Caco-2 (cell line): ENCODE measurements at regions of chr14 and their contacts with region 1.

Region 1: DNA sequence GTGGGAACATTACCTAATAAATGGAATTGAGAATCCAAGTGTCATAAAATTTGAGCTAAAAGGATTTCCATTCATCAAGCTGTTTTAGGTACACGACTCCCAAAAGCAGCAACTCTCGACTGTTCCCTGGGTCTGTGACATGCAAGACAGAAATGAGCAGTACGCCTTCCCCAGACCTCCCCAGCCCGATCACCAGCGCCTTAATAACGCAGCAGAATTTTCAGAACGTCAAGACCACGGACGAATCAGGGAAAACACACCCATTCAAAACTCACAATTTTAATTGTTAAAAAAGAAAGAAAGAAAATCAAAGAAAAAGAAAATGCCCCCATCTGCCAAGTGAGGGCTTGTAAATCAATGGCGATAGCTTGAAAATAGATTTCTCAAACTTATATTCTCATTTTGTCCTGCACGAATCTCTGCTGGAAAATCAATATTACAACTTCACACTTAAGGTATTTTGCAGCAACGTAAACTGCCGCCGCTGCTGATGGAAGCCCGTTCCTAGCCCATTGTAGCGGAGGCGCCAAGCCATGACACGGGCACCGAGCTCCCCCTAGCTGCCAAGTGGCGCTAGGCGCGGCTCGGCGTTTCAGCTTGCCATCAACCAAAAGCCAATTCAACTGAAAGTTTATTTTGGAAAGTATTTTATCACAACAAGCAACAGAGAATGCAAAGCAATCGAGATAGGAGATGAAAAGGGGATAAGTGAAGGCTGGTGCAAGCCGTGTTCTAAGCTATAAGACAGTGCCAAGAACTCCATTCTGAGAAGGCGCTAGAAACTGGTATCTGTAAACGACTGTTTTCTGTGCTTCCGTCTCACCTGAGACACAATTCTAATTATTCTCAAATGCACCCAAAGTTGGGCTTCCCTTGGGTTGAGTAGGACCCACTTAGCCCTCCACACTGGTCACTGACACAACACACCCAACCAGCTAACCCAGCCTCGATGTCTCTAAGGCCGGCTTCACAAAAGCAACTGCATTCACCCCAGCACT is 5.5 kb downstream of the BCL11B start:
- DNase-seq: peak; percentile 56 to 79
- H3K4me3 ChIP-seq: no peak overlapping the region
- H3K4me3 Mint-ChIP-seq: no peak overlapping the region
- H3K27ac Mint-ChIP-seq: no peak overlapping the region
- H3K4me1 ChIP-seq: no peaks in the 10 kb centered on the region
- H3K4me1 Mint-ChIP-seq: peaks cover 11% of the 10 kb centered on the region
- H3K27me3 ChIP-seq: peaks cover 5% of the 10 kb centered on the region
- H3K27me3 Mint-ChIP-seq: peaks cover 40% of the 10 kb centered on the region
- CTCF ChIP-seq: peak; percentile 86 to 98

Region 2: DNA sequence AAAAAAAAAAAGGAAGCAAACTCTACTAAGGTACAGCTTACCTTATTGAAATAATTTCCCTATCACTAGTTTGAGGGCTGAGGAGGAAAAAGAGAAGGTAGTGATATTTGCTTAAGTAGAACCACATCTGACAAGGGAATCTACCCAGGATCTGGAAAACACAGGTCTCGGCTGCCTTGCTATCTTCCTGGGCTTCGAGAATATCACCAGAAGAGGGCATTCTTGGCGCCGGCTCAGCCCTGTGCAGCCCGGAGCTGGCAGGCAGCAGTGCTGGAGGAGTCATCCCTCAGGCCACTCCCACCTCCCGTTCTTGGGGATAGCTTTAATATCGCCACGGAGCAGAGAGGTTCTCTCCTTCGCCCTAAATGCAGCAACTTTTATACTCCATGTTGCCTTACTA is 1288.1 kb before region 1 on chr14:
- CTCF ChIA-PET with region 1: interaction called, 8 read pairs
- POLR2A ChIA-PET with region 1: no interaction called
- intact Hi-C with region 1: loop called (anchors 1 kb)
- DNase-seq: peak; percentile 53 to 55
- H3K4me3 ChIP-seq: no peak overlapping the region
- H3K4me3 Mint-ChIP-seq: peak overlapping the region; percentile 29
- H3K27ac Mint-ChIP-seq: no peak overlapping the region
- H3K4me1 ChIP-seq: no peaks in the 10 kb centered on the region
- H3K4me1 Mint-ChIP-seq: no peaks in the 10 kb centered on the region
- H3K27me3 ChIP-seq: no peaks in the 10 kb centered on the region
- H3K27me3 Mint-ChIP-seq: no peaks in the 10 kb centered on the region
- CTCF ChIP-seq: peak in 1 of 2 experiments; percentile 29

Region 3: GRCh38 chr14:98957211-98958047 is 309.1 kb before region 1 on chr14:
- CTCF ChIA-PET with region 1: no interaction called
- POLR2A ChIA-PET with region 1: no interaction called
- intact Hi-C with region 1: no loop called
- DNase-seq: no peak
- H3K4me3 ChIP-seq: no peak overlapping the region
- H3K4me3 Mint-ChIP-seq: no peak overlapping the region
- H3K27ac Mint-ChIP-seq: no peak overlapping the region
- H3K4me1 ChIP-seq: no peaks in the 10 kb centered on the region
- H3K4me1 Mint-ChIP-seq: no peaks in the 10 kb centered on the region
- H3K27me3 ChIP-seq: no peaks in the 10 kb centered on the region
- H3K27me3 Mint-ChIP-seq: peaks cover 6% of the 10 kb centered on the region
- CTCF ChIP-seq: no peak

Region 4: DNA sequence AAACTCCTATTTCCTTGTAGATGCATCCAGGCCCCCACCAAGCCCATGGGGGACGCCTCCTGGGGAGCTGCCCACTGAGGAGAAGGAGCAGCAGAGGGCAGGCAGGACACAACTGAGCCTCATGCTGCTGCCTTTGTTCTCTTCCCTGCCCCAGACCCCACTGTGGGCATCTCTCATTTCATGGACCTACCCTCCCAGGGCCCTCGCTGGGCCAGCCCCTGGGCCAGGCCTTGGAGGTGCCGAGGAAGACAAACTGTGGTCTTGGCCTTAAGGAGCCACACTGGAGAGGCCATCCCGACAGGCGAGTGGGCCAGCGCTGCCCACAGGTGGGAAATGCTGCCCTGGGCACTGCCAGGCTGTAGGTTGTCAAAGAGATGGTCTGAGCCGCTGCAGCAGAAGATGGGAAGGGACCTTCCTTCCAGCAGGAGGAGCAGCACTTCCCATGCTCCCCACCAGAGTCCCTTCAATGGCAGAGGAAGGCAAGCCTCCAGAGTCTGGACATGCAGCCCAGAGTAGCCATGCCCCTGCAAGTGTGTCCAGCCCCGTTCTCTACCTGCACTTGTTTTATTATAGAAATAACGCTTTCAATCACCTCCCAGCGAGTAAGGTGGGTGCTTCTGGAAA is 141.9 kb before region 1 on chr14:
- CTCF ChIA-PET with region 1: interaction called, 5 read pairs
- POLR2A ChIA-PET with region 1: no interaction called
- intact Hi-C with region 1: loop called (anchors 1 kb)
- DNase-seq: no peak
- H3K4me3 ChIP-seq: no peak overlapping the region
- H3K4me3 Mint-ChIP-seq: no peak overlapping the region
- H3K27ac Mint-ChIP-seq: no peak overlapping the region
- H3K4me1 ChIP-seq: no peaks in the 10 kb centered on the region
- H3K4me1 Mint-ChIP-seq: no peaks in the 10 kb centered on the region
- H3K27me3 ChIP-seq: no peaks in the 10 kb centered on the region; the same call in 1 of the 2 replicates
- H3K27me3 Mint-ChIP-seq: peaks cover 8% of the 10 kb centered on the region
- CTCF ChIP-seq: no peak

Region 5: DNA sequence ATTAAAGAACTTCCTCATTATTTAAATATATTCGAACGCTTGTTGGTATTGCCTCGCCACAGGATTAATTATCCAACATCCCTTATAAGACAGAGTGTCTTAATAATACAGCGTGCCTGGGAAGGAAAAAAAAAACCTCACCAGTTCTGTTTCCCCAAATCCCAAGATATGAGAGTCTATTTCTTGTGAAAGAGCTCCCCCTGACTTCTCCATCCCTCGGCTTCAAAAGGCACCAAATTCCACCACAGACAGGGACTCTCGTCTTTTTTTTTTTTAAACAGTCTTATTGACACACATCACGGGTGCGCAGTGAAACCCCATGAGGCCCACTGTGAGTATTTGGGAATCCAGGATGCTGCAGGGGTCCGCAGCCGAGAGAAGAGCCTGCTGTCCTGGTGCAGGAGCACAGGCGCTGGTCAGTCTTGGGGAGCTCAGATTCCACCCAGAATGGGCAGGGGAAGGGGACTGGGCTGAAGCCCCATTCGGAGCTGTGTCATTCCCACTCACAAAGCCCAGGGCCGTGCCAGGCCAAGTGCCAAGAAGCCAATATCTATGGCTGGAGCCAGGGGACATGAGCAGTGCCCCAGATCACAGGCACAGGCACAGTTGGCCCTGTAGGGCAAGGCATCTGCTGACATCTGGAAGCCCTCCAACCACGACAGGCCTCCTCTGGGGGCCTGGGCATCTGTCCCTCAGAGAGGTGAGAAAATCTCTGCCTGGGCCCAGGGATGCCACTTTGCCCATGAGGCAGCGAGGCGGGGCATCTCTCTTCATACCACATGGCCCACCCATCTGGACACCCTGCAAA is 66.4 kb before region 1 on chr14:
- CTCF ChIA-PET with region 1: no interaction called
- POLR2A ChIA-PET with region 1: no interaction called
- intact Hi-C with region 1: loop called (anchors 5 kb)
- DNase-seq: no peak
- H3K4me3 ChIP-seq: no peak overlapping the region
- H3K4me3 Mint-ChIP-seq: no peak overlapping the region
- H3K27ac Mint-ChIP-seq: no peak overlapping the region
- H3K4me1 ChIP-seq: no peaks in the 10 kb centered on the region
- H3K4me1 Mint-ChIP-seq: no peaks in the 10 kb centered on the region
- H3K27me3 ChIP-seq: no peaks in the 10 kb centered on the region
- H3K27me3 Mint-ChIP-seq: peaks cover 5% of the 10 kb centered on the region
- CTCF ChIP-seq: peak in 1 of 2 experiments; percentile 5

Region 6: DNA sequence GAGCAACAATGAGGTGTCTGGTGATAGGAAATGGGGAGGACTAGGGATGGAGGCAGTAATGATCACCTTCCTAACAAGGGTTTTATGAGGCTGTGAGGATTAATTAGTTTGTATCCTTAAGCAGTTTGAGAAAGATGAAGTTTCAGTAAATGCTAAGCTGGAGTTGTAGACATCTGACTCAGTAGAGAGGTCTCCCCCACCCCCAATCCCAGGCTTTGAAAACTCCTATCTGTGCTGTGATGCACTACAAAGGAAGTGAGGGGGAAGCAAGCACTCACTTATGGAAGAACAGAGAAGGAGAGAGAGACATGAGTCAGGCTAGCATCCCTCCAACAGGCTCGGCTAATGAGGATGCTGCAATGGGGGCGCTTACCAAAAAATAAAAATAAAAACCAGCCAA is 11.1 kb after region 1 on chr14:
- CTCF ChIA-PET with region 1: no interaction called
- POLR2A ChIA-PET with region 1: no interaction called
- intact Hi-C with region 1: no loop called
- DNase-seq: no peak
- H3K4me3 ChIP-seq: no peak overlapping the region
- H3K4me3 Mint-ChIP-seq: no peak overlapping the region
- H3K27ac Mint-ChIP-seq: no peak overlapping the region
- H3K4me1 ChIP-seq: peaks cover 17% of the 10 kb centered on the region
- H3K4me1 Mint-ChIP-seq: no peaks in the 10 kb centered on the region
- H3K27me3 ChIP-seq: no peaks in the 10 kb centered on the region
- H3K27me3 Mint-ChIP-seq: peaks cover 18% of the 10 kb centered on the region
- CTCF ChIP-seq: no peak